MCF 10A (cell line): ENCODE measurements at regions of chr1 and their contacts with region 1.

Region 1: GRCh38 chr1:42941640-42942330 is 16.9 kb downstream of the SLC2A1 start:
- DNase-seq: peak; percentile 94
- H3K4me3 Mint-ChIP-seq: peak overlapping the region; percentile 54
- H3K27ac Mint-ChIP-seq: peak overlapping the region; percentile 58
- H3K4me1 Mint-ChIP-seq: peaks cover 78% of the 10 kb centered on the region
- H3K27me3 Mint-ChIP-seq: no peaks in the 10 kb centered on the region
- CTCF ChIP-seq: no peak

Region 2: DNA sequence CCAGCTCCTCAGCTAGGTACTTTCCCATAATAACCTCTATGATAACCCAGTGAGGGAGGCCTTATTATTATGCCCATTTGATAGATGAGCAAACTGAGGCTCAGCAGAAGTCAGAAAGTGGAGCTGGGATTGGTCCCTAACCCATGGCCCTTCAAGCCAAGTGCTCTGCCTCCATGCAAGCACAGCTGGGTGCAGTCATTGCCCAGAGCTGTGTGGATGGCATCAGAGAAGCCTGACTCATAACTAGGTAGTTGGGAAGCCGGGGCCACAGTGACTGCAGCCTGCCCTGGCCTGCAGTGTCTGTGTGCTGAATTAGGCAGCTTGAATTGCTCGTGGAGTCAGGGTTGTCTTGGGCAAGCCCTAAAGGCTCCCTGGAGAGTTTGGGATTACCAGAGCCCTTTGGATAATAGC is 106.8 kb after region 1 on chr1:
- CTCF ChIA-PET with region 1: no interaction called
- POLR2A ChIA-PET with region 1: interaction called, 10 read pairs
- intact Hi-C with region 1: no loop called
- DNase-seq: peak; percentile 79
- H3K4me3 Mint-ChIP-seq: no peak overlapping the region
- H3K27ac Mint-ChIP-seq: no peak overlapping the region
- H3K4me1 Mint-ChIP-seq: peaks cover 15% of the 10 kb centered on the region
- H3K27me3 Mint-ChIP-seq: no peaks in the 10 kb centered on the region
- CTCF ChIP-seq: no peak

Region 3: DNA sequence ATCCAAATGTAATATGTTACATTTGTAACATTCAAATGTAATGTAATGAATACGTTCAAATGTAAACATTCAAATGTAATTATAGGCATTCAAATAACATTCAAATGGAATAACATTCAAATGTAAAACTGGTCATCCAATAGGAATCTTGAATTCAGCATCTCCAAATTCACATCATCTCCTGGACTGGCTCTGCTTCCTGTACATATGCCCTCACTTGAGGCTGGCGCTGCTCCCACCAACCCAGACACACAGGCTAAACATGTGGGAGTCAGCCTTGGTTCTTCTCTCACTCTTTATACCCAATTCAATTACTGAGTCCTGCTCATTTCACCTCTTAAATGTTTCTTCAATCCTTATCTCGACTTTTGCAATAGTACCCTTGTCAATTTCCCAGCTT is 223.4 kb after region 1 on chr1:
- CTCF ChIA-PET with region 1: no interaction called
- POLR2A ChIA-PET with region 1: no interaction called
- intact Hi-C with region 1: no loop called
- DNase-seq: no peak
- H3K4me3 Mint-ChIP-seq: no peak overlapping the region
- H3K27ac Mint-ChIP-seq: no peak overlapping the region
- H3K4me1 Mint-ChIP-seq: no peaks in the 10 kb centered on the region
- H3K27me3 Mint-ChIP-seq: no peaks in the 10 kb centered on the region
- CTCF ChIP-seq: no peak